ENCODE measurements at regions of chr5 and their contacts with region 1.

Region 1: GRCh38 chr5:14270209-14270702 is 127.1 kb downstream of the TRIO start:
- DNase-seq: peak in 2 of 3 donors; percentile 41 to 66
- ATAC-seq: peak; percentile 90 to 92
- H3K4me3 ChIP-seq: no peak overlapping the region
- H3K27ac ChIP-seq: peak overlapping the region; percentile 68
- H3K4me1 ChIP-seq: peaks cover 24% of the 10 kb centered on the region
- H3K27me3 ChIP-seq: no peaks in the 10 kb centered on the region

Region 2: GRCh38 chr5:13994621-13995253 is 275.5 kb before region 1 on chr5:
- intact Hi-C with region 1: loop called in 2 of 4 experiments (anchors 10 kb)
- DNase-seq: no peak
- ATAC-seq: no peak
- H3K4me3 ChIP-seq: no peak overlapping the region
- H3K27ac ChIP-seq: no peak overlapping the region
- H3K4me1 ChIP-seq: no peaks in the 10 kb centered on the region
- H3K27me3 ChIP-seq: no peaks in the 10 kb centered on the region

Region 3: DNA sequence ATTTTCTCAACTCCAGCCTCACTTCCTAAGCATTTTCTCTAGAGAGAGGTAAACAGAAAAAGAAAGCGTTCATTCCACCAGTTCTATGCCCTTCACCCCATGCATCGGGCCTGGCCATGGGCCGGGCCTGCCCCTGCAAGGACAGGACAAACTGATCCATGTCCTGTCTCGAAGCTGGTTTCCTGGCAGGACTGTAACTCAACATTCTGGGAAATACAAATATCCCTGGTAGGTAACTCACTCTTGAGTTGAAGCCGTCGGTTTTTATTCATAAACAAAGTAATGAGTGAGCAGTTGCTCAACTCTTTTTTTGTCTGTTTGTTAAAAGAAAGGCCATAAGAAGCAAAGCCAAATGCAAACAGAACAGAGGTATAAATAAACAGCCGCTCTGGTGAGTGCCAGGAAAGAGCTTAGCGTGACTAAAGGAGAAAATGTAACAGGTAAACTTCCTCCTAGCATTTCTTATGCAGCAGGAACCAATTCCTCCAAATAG is 261.4 kb before region 1 on chr5:
- intact Hi-C with region 1: loop called in 1 of 4 experiments (anchors 10 kb)
- DNase-seq: no peak
- ATAC-seq: no peak
- H3K4me3 ChIP-seq: no peak overlapping the region
- H3K27ac ChIP-seq: no peak overlapping the region
- H3K4me1 ChIP-seq: peaks cover 4% of the 10 kb centered on the region
- H3K27me3 ChIP-seq: no peaks in the 10 kb centered on the region

Region 4: GRCh38 chr5:14108170-14108996 is 161.9 kb before region 1 on chr5:
- intact Hi-C with region 1: loop called (anchors 2 to 5 kb)
- DNase-seq: peak; percentile 47 to 76 (median 66)
- ATAC-seq: peak; percentile 75 to 86
- H3K4me3 ChIP-seq: peak overlapping the region; percentile 19
- H3K27ac ChIP-seq: no peak overlapping the region
- H3K4me1 ChIP-seq: no peaks in the 10 kb centered on the region
- H3K27me3 ChIP-seq: no peaks in the 10 kb centered on the region